Mammary epithelial cell (primary cell): ENCODE measurements at regions of chr7 and their contacts with region 1.

Region 1: GRCh38 chr7:18408461-18408860 is 87.1 kb upstream of the HDAC9 start:
- DNase-seq: peak; percentile 24
- H3K4me3 ChIP-seq: no peak overlapping the region
- H3K27ac ChIP-seq: no peak overlapping the region
- H3K4me1 ChIP-seq: peaks cover 15% of the 10 kb centered on the region
- H3K27me3 ChIP-seq: no peaks in the 10 kb centered on the region
- CTCF ChIP-seq: no peak

Region 2: GRCh38 chr7:18495412-18496340 is 87.2 kb after region 1 on chr7 and contains the start of gene HDAC9:
- CTCF ChIA-PET with region 1: no interaction called
- dilution Hi-C with region 1: no loop called
- in situ Hi-C with region 1: no loop called
- intact Hi-C with region 1: loop called (anchors 5 kb)
- DNase-seq: peak; percentile 51
- H3K4me3 ChIP-seq: peak within 1 kb of the TSS; percentile 29 to 40 (median 38)
- H3K27ac ChIP-seq: no peak within 1 kb of the TSS
- H3K4me1 ChIP-seq: peaks cover 15% of the 10 kb centered on the region
- H3K27me3 ChIP-seq: no peaks in the 10 kb centered on the region
- CTCF ChIP-seq: no peak
- total RNA-seq, gene HDAC9: 33.3 to 34.0 TPM